MCF 10A (cell line): ENCODE measurements at regions of chr18 and their contacts with region 1.

Region 1: DNA sequence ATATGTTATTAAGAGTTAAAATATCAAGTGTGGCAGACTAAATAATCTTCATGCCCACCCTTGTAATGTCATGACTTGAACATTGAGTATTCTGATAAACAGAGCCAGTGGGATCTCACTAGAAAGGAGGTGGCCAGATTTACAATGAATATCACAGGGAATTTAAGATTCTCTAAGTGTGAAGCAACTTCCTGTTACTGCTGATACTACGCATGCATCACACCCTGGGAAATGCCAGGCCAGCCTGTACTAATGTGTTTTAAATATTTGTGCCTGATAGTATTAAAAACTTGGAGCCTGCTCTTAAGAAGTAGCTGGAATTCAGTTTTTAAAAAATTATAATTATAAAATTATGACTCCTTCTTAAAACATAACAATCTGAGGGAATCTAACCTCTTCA is 148.3 kb downstream of the LAMA3 start:
- DNase-seq: peak; percentile 59
- H3K4me3 Mint-ChIP-seq: no peak overlapping the region
- H3K27ac Mint-ChIP-seq: peak overlapping the region; percentile 95
- H3K4me1 Mint-ChIP-seq: peaks cover 18% of the 10 kb centered on the region
- H3K27me3 Mint-ChIP-seq: no peaks in the 10 kb centered on the region
- CTCF ChIP-seq: no peak

Region 2: DNA sequence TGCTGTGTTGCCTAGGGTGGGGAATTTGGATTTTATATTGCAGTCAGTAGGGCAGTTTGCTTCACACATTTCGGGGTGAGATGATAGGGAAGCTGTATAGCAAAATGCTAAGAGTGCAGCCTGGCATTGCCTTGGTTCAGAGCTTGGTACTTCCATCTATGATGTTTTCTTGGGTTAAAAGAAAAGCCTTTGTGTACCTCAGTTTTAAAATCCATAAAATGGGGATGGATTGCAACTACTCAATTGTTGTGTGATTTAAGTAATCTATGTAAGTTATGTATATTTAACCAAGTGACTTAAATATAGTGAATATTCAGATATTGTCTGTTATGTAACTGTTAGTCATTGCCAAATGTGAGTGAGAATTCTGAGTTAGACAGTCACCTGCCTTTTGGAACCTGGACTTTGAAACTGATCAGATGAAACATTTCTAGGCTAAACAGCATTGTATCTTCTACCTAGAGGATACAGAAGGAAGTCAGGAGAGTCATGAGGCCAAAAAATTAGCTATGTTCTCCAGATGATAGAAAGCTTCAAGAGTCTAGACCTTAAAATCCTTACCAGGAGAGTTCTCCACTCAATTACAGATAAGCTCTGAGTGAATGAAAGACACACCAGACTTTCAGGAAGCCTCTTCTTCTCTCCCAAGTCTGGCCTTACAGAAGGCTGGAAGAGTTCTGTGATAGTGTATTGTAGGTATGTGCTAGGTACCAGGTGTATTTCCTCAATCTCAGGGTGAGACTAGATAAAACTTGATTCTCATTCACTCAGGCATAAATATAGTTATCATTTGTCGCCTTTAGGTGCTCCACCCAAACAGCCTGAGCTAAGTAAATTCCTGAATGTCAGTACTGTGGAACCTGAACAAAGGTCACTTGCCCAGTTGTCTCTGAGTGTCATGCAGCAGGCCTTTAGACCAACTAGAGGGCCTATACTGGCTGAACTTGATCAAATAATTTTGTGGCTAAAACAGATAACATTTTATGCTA is 377.0 kb before region 1 on chr18:
- CTCF ChIA-PET with region 1: no interaction called
- POLR2A ChIA-PET with region 1: no interaction called
- intact Hi-C with region 1: no loop called
- DNase-seq: no peak
- H3K4me3 Mint-ChIP-seq: no peak overlapping the region
- H3K27ac Mint-ChIP-seq: no peak overlapping the region
- H3K4me1 Mint-ChIP-seq: peaks cover 43% of the 10 kb centered on the region
- H3K27me3 Mint-ChIP-seq: no peaks in the 10 kb centered on the region
- CTCF ChIP-seq: no peak

Region 3: GRCh38 chr18:23852208-23853045 is 14.8 kb after region 1 on chr18:
- CTCF ChIA-PET with region 1: interaction called, 3 read pairs
- POLR2A ChIA-PET with region 1: interaction called, 27 read pairs
- intact Hi-C with region 1: no loop called
- DNase-seq: no peak
- H3K4me3 Mint-ChIP-seq: no peak overlapping the region
- H3K27ac Mint-ChIP-seq: no peak overlapping the region
- H3K4me1 Mint-ChIP-seq: peaks cover 33% of the 10 kb centered on the region
- H3K27me3 Mint-ChIP-seq: no peaks in the 10 kb centered on the region
- CTCF ChIP-seq: no peak

Region 4: DNA sequence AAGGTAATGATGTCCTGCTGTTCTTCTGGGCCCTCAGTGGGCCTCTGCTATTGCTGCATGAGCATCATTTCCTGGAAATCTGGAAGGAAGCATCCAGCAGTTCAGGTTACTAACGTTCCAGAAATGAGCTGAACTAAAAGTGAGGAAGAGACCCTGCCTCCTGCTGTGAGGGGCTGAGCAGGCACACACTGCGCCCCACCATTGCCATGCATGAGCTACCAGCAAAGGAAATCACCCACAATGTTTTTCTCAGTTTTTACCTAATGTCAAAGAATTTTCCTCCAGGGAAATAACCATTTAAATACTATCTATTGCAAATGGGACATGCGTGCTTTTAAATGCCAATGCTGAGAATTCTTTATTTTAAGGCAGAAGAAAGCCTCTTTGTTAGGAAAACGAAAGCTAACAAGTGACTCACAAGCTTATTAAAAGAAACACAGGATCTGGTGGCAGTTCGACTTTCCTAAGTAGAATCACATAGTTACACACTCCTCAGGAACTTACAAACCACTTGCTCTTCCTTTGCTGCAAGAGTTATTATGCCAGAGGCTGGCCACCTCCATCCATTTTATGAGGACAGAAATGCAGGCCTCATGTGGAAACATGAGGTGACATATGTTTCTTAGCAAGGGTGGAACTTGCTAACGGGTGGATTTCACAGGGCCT is 24.3 kb after region 1 on chr18:
- CTCF ChIA-PET with region 1: interaction called, 3 read pairs
- POLR2A ChIA-PET with region 1: interaction called, 27 read pairs
- intact Hi-C with region 1: no loop called
- DNase-seq: no peak
- H3K4me3 Mint-ChIP-seq: no peak overlapping the region
- H3K27ac Mint-ChIP-seq: no peak overlapping the region
- H3K4me1 Mint-ChIP-seq: peaks cover 24% of the 10 kb centered on the region
- H3K27me3 Mint-ChIP-seq: no peaks in the 10 kb centered on the region
- CTCF ChIP-seq: no peak

Region 5: GRCh38 chr18:23871410-23871809 is 33.8 kb after region 1 on chr18:
- CTCF ChIA-PET with region 1: interaction called, 5 read pairs
- POLR2A ChIA-PET with region 1: interaction called, 70 read pairs
- intact Hi-C with region 1: no loop called
- DNase-seq: peak; percentile 82
- H3K4me3 Mint-ChIP-seq: peak overlapping the region; percentile 90
- H3K27ac Mint-ChIP-seq: peak overlapping the region; percentile 98
- H3K4me1 Mint-ChIP-seq: peaks cover 33% of the 10 kb centered on the region
- H3K27me3 Mint-ChIP-seq: no peaks in the 10 kb centered on the region
- CTCF ChIP-seq: no peak

Region 6: GRCh38 chr18:23883277-23883790 is 45.7 kb after region 1 on chr18:
- CTCF ChIA-PET with region 1: interaction called, 4 read pairs
- POLR2A ChIA-PET with region 1: interaction called, 48 read pairs
- intact Hi-C with region 1: no loop called
- DNase-seq: peak; percentile 80
- H3K4me3 Mint-ChIP-seq: peak overlapping the region; percentile 34
- H3K27ac Mint-ChIP-seq: peak overlapping the region; percentile 86
- H3K4me1 Mint-ChIP-seq: peaks cover 60% of the 10 kb centered on the region
- H3K27me3 Mint-ChIP-seq: no peaks in the 10 kb centered on the region
- CTCF ChIP-seq: no peak